Activated CD4-positive, alpha-beta memory T cell treated with anti-CD3 and anti-CD28 coated beads, Interleukin-2, amount 10 ng/mL, durations not matched to agents 7 days and 5 days (primary cell): ENCODE measurements at regions of chr2 and their contacts with region 1.

Region 1: GRCh38 chr2:230793572-230794359 is 71.0 kb upstream of the ITM2C start:
- DNase-seq: peak; percentile 83
- H3K4me3 Mint-ChIP-seq: peak overlapping the region; percentile 71
- H3K27ac Mint-ChIP-seq: peak overlapping the region; percentile 96
- H3K4me1 Mint-ChIP-seq: peaks cover 54% of the 10 kb centered on the region
- H3K27me3 Mint-ChIP-seq: no peaks in the 10 kb centered on the region

Region 2: DNA sequence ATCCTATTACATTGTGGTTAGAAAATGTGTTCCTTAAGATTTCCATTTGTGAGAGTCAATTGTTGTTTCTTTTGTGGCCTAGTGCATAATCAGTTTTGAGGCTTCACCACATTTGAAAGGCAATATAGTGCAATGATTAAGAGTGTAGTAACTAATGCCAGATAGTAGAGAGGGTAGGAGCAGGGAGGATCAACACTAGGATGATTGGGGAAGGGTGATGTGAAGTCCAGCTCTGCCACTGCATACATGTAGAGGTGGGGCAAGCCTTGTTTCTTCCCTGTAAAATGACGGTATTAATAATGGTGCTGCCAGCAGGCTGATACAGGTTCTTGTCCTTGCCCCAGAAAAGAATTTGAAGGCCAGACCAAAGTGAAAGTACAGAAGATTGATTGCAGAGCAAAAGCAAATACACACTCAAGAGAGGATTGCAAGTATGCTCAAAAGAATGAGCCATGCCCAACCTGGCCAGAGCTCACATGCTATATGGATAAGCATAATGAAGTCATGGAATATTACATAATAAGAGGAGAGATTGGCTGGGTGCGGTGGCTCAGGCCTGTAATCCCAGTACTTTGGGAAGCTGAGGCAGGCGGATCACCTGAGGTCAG is 369.8 kb before region 1 on chr2:
- CTCF ChIA-PET with region 1: no interaction called
- POLR2A ChIA-PET with region 1: no interaction called
- DNase-seq: no peak
- H3K4me3 Mint-ChIP-seq: peak overlapping the region; percentile 9
- H3K27ac Mint-ChIP-seq: peak overlapping the region; percentile 0
- H3K4me1 Mint-ChIP-seq: peaks cover 83% of the 10 kb centered on the region
- H3K27me3 Mint-ChIP-seq: no peaks in the 10 kb centered on the region

Region 3: GRCh38 chr2:230774348-230774951 is 19.3 kb before region 1 on chr2:
- CTCF ChIA-PET with region 1: interaction called, 29 read pairs
- POLR2A ChIA-PET with region 1: interaction called, 155 read pairs
- DNase-seq: no peak
- H3K4me3 Mint-ChIP-seq: no peak overlapping the region
- H3K27ac Mint-ChIP-seq: no peak overlapping the region
- H3K4me1 Mint-ChIP-seq: peaks cover 86% of the 10 kb centered on the region
- H3K27me3 Mint-ChIP-seq: no peaks in the 10 kb centered on the region

Region 4: DNA sequence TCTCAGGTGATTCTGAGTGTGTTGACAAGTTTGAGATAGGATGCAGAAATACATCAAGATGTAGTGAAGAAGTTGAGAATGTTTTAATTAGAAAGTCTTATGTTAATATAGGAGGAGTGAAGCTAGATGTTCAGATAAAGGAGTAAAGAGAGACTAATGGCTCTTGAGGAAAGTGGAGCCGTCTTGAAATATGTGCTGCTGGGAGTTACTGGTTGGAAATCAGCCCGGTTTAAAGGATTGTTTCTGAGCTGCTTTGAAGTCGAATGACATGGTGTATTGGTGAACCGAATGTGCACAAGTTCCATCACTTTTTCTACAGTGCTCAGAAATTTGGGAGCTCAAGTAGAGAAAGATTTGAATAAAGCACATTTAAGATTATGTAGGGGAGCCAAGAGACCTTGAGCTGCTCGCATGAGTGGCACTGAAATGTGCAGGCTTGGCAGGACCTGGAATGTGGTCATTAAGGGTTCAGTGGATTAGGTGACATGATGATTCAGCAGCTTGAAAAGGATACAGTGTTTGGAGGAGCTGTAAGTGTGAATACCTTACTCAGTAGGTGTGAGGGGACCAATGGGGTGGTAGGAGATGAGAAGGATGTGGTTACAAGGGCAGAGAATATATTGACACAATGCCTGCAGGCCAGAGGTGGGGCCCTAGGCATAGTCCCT is 12.5 kb before region 1 on chr2:
- CTCF ChIA-PET with region 1: interaction called, 29 read pairs
- POLR2A ChIA-PET with region 1: interaction called, 155 read pairs
- DNase-seq: peak; percentile 77
- H3K4me3 Mint-ChIP-seq: peak overlapping the region; percentile 17
- H3K27ac Mint-ChIP-seq: peak overlapping the region; percentile 84
- H3K4me1 Mint-ChIP-seq: peaks cover 86% of the 10 kb centered on the region
- H3K27me3 Mint-ChIP-seq: no peaks in the 10 kb centered on the region